ENCODE measurements at regions of chr14 and their contacts with region 1.

Region 1: DNA sequence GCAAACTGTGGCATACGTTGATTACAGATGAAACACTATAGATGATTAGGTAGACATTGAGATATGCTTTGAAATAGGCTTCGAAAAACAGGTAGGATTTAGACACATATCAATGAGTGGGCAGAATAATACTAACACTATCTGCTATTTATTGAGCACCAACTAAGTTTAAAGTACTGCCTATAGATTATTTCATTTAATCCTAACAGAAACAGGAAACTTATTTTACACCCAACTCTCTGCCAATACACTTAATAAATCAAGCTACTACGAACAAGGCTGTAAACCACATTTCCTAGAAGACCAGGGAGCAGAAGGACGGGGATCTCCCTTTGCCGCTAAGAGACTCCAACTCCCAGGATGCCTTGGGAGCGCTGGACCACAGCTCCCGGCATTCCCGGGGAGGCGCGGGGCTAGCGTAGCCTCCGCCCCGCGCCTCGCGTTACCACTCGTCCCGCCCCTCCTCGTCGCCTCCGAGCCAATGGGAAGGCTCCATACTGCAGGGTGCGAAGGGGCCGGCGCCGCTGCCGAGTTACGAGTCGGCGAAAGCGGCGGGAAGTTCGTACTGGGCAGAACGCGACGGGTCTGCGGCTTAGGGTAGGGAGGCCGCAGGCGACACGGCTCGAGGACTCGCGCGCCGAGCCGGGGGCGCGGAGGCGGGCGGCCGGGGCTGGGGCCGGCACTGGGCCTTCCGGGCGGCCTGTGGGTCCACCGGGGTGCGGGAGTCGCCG is at the start of gene VRK1:
- DNase-seq: peak; percentile 88 to 96
- ATAC-seq: peak; percentile 95 to 97 (median 97)
- H3K4me3 ChIP-seq: peak within 1 kb of the TSS; percentile 35
- H3K4me3 Mint-ChIP-seq: peak within 1 kb of the TSS; percentile 93
- H3K27ac ChIP-seq: peak within 1 kb of the TSS; percentile 61
- H3K27ac Mint-ChIP-seq: peak within 1 kb of the TSS; percentile 87 to 92
- H3K4me1 ChIP-seq: peaks cover 9% of the 10 kb centered on the region
- H3K4me1 Mint-ChIP-seq: peaks cover 17 to 23% of the 10 kb centered on the region in 2 donors
- H3K27me3 ChIP-seq: no peaks in the 10 kb centered on the region
- H3K27me3 Mint-ChIP-seq: peaks cover 0 to 5% of the 10 kb centered on the region in 2 donors
- CTCF ChIP-seq: no peak
- total RNA-seq, gene VRK1: 34.4 to 40.6 (median 37.3) TPM

Region 2: DNA sequence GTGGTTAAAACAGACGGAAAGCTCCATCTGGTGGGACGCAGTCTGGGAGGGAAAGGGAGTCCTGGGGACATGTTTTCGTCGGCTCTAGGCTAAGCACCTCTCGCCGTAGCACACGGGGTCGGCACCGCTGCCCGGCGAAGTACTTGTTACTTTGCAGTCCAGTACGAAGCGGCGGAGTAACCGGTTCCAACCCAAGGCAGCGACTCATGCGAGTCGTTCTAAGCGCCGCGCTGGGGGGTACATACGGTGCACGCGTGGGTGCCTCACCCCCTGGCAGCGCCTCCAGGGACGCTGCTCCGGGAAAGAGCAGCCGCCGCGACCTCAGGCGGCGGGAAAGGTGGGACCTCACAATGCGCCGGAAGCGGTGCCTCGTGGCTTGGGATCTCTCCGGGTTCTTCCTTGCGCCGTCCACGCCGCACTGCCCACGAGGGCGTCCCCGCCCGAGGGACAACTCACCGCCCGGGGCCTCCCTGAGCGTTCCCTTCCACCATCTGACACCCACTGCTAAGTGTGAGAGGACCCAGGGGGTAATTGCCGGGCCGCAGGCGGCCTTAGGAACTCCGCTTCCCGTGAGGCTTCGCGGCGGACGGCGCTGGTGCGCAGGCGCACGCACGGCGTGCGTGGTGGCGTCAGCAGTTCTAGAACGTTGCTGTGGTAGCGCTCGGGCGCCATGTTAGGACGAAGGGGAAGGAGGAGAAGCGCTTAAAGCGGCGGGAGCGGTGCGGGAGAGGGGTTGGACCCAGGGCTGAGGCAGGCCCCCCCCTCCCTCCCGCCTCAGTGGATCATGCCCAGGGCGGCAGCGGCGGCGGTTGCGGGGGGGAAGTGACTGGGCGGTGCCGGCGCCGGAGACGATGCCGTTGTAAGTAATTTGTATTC is 295.0 kb before region 1 on chr14 and contains the start of gene PAPOLA:
- intact Hi-C with region 1: loop called (anchors 5 kb)
- DNase-seq: peak; percentile 95 to 99
- ATAC-seq: peak; percentile 86 to 97 (median 91)
- H3K4me3 ChIP-seq: peak within 1 kb of the TSS; percentile 100
- H3K4me3 Mint-ChIP-seq: peak within 1 kb of the TSS; percentile 90
- H3K27ac ChIP-seq: peak within 1 kb of the TSS; percentile 99
- H3K27ac Mint-ChIP-seq: peak within 1 kb of the TSS; percentile 90 to 99
- H3K4me1 ChIP-seq: peaks cover 35% of the 10 kb centered on the region
- H3K4me1 Mint-ChIP-seq: peaks cover 45 to 56% of the 10 kb centered on the region in 2 donors
- H3K27me3 ChIP-seq: no peaks in the 10 kb centered on the region
- H3K27me3 Mint-ChIP-seq: peaks cover 13 to 14% of the 10 kb centered on the region in 2 donors
- CTCF ChIP-seq: no peak
- total RNA-seq, gene PAPOLA: 200 to 225 (median 224) TPM

Region 3: GRCh38 chr14:96705422-96706092 is 91.5 kb before region 1 on chr14:
- intact Hi-C with region 1: no loop called
- DNase-seq: no peak
- ATAC-seq: no peak
- H3K4me3 ChIP-seq: no peak overlapping the region
- H3K4me3 Mint-ChIP-seq: no peak overlapping the region
- H3K27ac ChIP-seq: no peak overlapping the region
- H3K27ac Mint-ChIP-seq: no peak overlapping the region
- H3K4me1 ChIP-seq: no peaks in the 10 kb centered on the region
- H3K4me1 Mint-ChIP-seq: no peaks in the 10 kb centered on the region
- H3K27me3 ChIP-seq: no peaks in the 10 kb centered on the region
- H3K27me3 Mint-ChIP-seq: peaks cover 8 to 9% of the 10 kb centered on the region in 2 donors
- CTCF ChIP-seq: no peak

Region 4: GRCh38 chr14:96852823-96853422 is 55.9 kb after region 1 on chr14:
- intact Hi-C with region 1: loop called (anchors 1 kb)
- DNase-seq: peak in 1 of 2 donors; percentile 52
- ATAC-seq: peak; percentile 58 to 69 (median 64)
- H3K4me3 ChIP-seq: no peak overlapping the region
- H3K4me3 Mint-ChIP-seq: no peak overlapping the region
- H3K27ac ChIP-seq: no peak overlapping the region
- H3K27ac Mint-ChIP-seq: no peak overlapping the region
- H3K4me1 ChIP-seq: no peaks in the 10 kb centered on the region
- H3K4me1 Mint-ChIP-seq: no peaks in the 10 kb centered on the region
- H3K27me3 ChIP-seq: no peaks in the 10 kb centered on the region
- H3K27me3 Mint-ChIP-seq: no peaks in the 10 kb centered on the region
- CTCF ChIP-seq: peak; percentile 77